Gastrocnemius medialis (tissue), 4 donors: ENCODE measurements at regions of chr12 and their contacts with region 1.

Region 1: DNA sequence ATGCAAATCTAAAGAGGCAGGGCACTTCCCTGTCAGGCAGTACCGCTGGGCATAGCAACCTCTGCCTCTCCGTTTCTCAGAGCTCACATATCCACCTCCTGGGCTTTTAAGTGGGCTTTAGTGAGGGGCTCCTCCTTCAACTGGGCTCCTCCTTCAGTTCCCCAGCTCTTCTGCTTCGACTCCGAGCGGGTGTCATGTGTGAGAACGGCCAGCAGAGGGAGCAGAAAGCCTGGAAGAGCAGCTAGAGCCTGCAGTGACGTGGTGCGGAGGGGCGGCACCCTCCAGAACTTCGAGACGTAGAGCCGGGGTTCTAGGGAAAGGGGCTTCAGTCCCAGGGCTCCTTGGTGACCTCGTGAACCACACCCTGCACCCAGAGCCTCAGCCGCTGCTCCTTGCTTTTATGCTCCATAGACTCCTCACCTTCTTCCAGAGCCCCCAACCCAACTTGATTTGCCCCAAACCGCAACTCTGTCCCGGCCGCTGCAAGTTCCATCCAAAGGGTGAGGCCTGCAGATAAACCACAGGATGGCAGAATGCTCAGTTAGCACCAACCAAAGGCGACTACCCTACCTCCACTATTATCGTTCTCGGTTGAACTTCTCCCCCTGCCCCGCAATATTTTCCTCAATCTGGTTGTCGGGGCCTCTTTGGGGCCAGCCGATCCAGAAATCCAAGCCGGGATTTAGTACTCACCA is 383 bp upstream of the GLI1 start:
- DNase-seq: peak; percentile 78 to 88
- ATAC-seq: peak; percentile 69
- H3K4me3 ChIP-seq: peak overlapping the region; percentile 63 to 82 (median 80)
- H3K27ac ChIP-seq: peak overlapping the region; percentile 54 to 79 (median 59)
- H3K4me1 ChIP-seq: peaks cover 47 to 54% of the 10 kb centered on the region in 2 donors
- H3K27me3 ChIP-seq: peaks cover 14 to 19% (median 18%) of the 10 kb centered on the region in 3 donors
- CTCF ChIP-seq: peak; percentile 95 to 96 (median 96)
- POLR2A ChIP-seq: peak; percentile 1 to 35

Region 2: GRCh38 chr12:57268264-57268663 is 190.9 kb before region 1 on chr12:
- in situ Hi-C with region 1: loop called in 1 of 4 experiments (anchors 10 kb)
- intact Hi-C with region 1: no loop called
- DNase-seq: no peak
- ATAC-seq: no peak
- H3K4me3 ChIP-seq: no peak overlapping the region
- H3K27ac ChIP-seq: no peak overlapping the region
- H3K4me1 ChIP-seq: peaks cover 27 to 28% of the 10 kb centered on the region in 2 donors
- H3K27me3 ChIP-seq: no peaks in the 10 kb centered on the region
- CTCF ChIP-seq: no peak
- POLR2A ChIP-seq: no peak

Region 3: DNA sequence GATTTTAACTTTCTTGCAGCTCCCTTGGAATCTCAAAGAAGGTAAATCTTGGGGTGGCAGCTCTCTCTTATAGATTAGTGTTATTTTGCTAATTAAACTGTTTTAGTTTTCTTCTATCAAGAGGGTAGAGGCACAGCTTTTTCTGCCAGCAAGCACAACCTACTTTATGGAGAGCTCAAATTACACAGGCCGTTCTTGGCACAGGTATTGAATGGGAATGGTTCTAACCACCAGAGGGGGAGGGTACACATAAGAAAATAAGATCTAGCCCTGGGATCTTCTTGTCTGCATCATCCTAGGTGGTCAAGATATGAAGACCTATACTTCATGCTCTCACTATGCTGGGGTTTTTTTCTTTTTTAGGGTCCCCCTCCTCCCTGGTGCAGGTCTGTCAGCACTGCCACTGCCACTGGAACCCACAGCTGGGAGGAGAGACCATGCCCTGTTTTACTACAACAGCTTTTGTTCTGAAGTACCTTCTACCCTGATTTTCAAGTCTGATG is 159.6 kb before region 1 on chr12:
- in situ Hi-C with region 1: loop called in 1 of 4 experiments (anchors 5 kb)
- intact Hi-C with region 1: no loop called
- DNase-seq: peak in 1 of 2 donors; percentile 7
- ATAC-seq: peak; percentile 90 to 91
- H3K4me3 ChIP-seq: no peak overlapping the region
- H3K27ac ChIP-seq: peak overlapping the region in 2 of 4 donors; percentile 25 to 51
- H3K4me1 ChIP-seq: peaks cover 16 to 20% of the 10 kb centered on the region in 2 donors
- H3K27me3 ChIP-seq: no peaks in the 10 kb centered on the region
- CTCF ChIP-seq: no peak
- POLR2A ChIP-seq: no peak

Region 4: GRCh38 chr12:57319678-57320469 is 139.3 kb before region 1 on chr12:
- in situ Hi-C with region 1: loop called in 1 of 4 experiments (anchors 10 kb)
- intact Hi-C with region 1: no loop called
- DNase-seq: no peak
- ATAC-seq: no peak
- H3K4me3 ChIP-seq: no peak overlapping the region
- H3K27ac ChIP-seq: peak overlapping the region in 1 of 4 donors; percentile 5
- H3K4me1 ChIP-seq: peaks cover 0 to 5% of the 10 kb centered on the region in 2 donors
- H3K27me3 ChIP-seq: no peaks in the 10 kb centered on the region
- CTCF ChIP-seq: no peak
- POLR2A ChIP-seq: no peak

Region 5: DNA sequence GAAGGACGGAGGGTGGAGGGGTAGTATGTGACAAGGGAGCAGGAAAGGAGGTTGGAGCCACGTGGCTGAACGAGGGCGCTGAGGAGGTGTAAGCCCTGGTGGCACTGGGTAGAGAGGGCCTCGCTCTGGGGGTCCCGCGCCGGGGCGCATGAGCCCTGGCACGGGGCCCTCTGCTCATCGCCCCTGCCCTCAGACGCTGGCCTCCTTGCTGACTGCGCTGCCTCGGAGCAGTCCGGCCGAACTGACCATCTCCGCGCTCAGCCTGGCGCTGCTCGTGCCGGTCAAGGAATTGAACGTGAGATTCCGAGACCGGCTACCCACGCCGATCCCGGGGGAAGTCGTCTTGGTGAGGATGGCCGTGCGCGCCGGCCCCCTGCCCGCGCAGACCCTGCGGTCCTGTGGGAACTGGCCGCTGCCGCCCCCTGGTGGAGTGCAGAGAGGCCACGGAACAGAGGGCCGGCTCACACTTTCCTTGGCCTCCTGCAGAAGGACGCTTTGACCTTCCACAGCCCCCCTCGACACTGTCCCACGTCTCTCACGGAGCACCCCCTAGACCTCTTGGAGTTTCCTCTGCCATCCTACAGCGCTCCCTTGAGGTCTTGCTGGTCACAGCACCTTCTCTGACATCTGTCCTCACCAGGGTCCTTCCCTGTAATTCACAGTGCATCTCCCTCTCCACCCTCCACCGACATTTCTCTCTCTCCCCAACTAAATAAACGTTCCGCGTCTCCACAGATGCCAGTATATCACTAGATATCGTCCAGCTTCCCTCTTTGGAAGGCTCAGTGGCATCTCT is 162.5 kb after region 1 on chr12:
- in situ Hi-C with region 1: no loop called
- intact Hi-C with region 1: loop called (anchors 5 kb)
- DNase-seq: no peak
- ATAC-seq: peak; percentile 60 to 75
- H3K4me3 ChIP-seq: peak overlapping the region; percentile 37 to 85 (median 56)
- H3K27ac ChIP-seq: no peak overlapping the region
- H3K4me1 ChIP-seq: peaks cover 8 to 14% of the 10 kb centered on the region in 2 donors
- H3K27me3 ChIP-seq: peaks cover 53 to 69% (median 61%) of the 10 kb centered on the region in 3 donors
- CTCF ChIP-seq: peak; percentile 74 to 94 (median 87)
- POLR2A ChIP-seq: no peak

Region 6: DNA sequence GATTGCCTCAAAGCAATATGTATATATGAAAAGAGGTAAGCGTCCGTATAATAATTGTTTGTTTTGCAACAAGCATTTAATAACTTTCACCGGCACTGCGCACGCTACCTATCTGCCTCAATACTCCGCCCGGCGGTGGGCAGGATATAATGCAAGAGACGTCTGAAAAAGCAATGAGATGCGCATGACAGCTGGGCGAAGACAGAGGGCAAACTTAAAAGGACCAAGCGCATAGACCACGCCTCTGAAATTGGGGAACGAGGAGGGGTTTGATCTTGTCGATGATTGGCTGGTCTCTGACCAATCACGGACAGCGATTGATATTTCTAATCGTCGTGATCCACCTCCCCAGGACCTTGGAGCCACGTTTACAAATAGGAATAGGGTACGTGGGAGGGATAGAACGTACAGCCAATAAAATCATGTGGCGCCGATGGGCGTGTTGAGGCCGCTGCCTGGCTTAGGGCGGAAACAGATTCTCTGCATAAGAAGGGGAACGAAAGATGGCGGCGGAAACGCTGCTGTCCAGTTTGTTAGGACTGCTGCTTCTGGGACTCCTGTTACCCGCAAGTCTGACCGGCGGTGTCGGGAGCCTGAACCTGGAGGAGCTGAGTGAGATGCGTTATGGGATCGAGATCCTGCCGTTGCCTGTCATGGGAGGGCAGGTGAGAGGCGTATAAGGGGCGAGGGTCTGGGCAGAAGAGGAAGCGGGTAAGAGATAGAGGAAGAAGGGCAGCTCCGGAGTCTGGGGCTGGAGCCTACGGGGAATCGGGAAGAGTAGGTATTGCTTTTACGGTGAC is 234.7 kb after region 1 on chr12 and contains the start of gene OS9:
- in situ Hi-C with region 1: no loop called
- intact Hi-C with region 1: loop called (anchors 10 kb)
- DNase-seq: peak; percentile 99
- ATAC-seq: peak; percentile 98 to 99
- H3K4me3 ChIP-seq: peak within 1 kb of the TSS; percentile 68 to 97 (median 79)
- H3K27ac ChIP-seq: peak within 1 kb of the TSS; percentile 77 to 90 (median 86)
- H3K4me1 ChIP-seq: peaks cover 7% of the 10 kb centered on the region in 2 donors
- H3K27me3 ChIP-seq: peaks cover 0 to under 1% (median 0%) of the 10 kb centered on the region in 3 donors
- CTCF ChIP-seq: peak; percentile 75 to 84 (median 78)
- POLR2A ChIP-seq: peak; percentile 71 to 73
- total RNA-seq, gene OS9: 77.0 to 152 (median 106) TPM